PC-9 (cell line): ENCODE measurements at regions of chr7 and their contacts with region 1.

Region 1: GRCh38 chr7:116395125-116395791 is 104.3 kb upstream of the CAV2 start:
- DNase-seq: peak; percentile 85 to 90
- H3K4me3 ChIP-seq: peak overlapping the region; percentile 37; the same call in 1 of the 2 replicates
- H3K27ac ChIP-seq: peak overlapping the region; percentile 96
- H3K4me1 ChIP-seq: peaks cover 29% of the 10 kb centered on the region
- H3K27me3 ChIP-seq: no peaks in the 10 kb centered on the region
- CTCF ChIP-seq: no peak

Region 2: GRCh38 chr7:116367221-116367813 is 27.9 kb before region 1 on chr7:
- CTCF ChIA-PET with region 1: no interaction called
- POLR2A ChIA-PET with region 1: no interaction called
- intact Hi-C with region 1: loop called (anchors 2 kb)
- DNase-seq: peak in 1 of 2 experiments; percentile 52
- H3K4me3 ChIP-seq: no peak overlapping the region
- H3K27ac ChIP-seq: no peak overlapping the region
- H3K4me1 ChIP-seq: peaks cover 15% of the 10 kb centered on the region
- H3K27me3 ChIP-seq: no peaks in the 10 kb centered on the region
- CTCF ChIP-seq: no peak

Region 3: DNA sequence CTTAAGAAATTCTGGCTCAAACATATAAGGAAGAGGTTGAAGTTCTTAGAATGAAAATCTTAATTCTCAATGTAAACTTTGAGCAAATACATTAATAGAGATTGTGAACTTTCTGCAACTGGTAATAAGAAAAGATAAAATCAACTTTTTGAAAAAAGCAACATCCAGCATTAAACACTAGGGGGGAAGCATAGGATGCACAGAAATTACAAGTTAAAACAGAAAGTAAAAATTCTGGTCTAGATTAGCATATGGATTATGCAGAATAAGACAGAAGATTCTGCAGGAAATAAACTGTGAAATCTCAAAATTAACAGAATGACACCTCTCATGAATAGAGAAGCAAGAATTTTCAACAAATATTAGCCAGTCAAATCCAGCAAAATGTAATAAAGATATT is 66.2 kb after region 1 on chr7:
- CTCF ChIA-PET with region 1: no interaction called
- POLR2A ChIA-PET with region 1: interaction called, 12 read pairs
- intact Hi-C with region 1: no loop called
- DNase-seq: no peak
- H3K4me3 ChIP-seq: no peak overlapping the region
- H3K27ac ChIP-seq: no peak overlapping the region
- H3K4me1 ChIP-seq: peaks cover 26% of the 10 kb centered on the region
- H3K27me3 ChIP-seq: no peaks in the 10 kb centered on the region
- CTCF ChIP-seq: no peak

Region 4: DNA sequence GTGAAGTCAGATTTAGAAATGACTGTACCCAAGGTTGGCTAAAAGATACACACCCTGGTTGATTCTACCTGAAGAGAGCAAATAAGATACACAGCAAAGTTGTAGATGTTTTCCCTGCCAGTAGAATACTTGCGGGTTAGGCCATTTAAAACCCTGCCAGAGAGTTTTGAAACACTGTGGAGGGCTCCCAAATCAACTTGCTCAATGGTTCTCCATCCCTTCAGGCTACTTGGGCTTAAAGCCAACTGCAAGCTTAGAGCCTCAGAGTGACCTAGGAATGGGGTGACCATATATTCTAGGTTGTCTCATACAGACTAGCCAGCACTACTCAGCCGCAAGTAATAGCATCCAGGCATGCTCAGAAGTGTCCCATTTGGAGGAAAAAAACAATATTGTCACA is 139.5 kb after region 1 on chr7:
- CTCF ChIA-PET with region 1: no interaction called
- POLR2A ChIA-PET with region 1: no interaction called
- intact Hi-C with region 1: no loop called
- DNase-seq: no peak
- H3K4me3 ChIP-seq: no peak overlapping the region
- H3K27ac ChIP-seq: no peak overlapping the region
- H3K4me1 ChIP-seq: peaks cover 6% of the 10 kb centered on the region; the same call in 1 of the 2 replicates
- H3K27me3 ChIP-seq: no peaks in the 10 kb centered on the region
- CTCF ChIP-seq: no peak

Region 5: DNA sequence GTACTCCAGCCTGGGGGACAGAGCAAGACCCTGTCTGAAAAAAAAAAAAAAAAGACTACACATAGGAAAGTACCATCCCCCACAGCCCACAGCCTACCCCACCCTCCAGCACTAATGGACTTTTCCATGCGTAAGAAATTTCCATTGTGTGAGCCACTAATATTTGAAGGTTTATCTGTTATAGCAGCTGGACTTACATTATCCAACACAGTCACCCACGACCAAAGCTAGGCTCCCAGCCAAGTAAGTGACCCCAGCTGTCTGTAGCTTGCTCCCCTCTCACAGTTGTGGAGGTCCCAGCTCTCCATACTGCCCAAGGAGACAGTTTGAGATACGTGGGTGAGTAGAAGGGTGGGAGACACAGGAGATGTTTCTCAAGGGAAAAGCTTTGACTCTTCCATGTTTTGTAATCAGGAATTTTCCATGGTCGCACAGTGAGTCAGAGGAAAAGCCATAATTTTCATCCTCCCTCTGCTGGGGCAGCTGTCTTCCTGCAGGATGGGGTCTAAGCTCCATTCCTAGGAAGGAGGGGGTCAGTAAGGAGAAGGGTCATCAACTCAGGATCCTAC is 187.0 kb after region 1 on chr7:
- CTCF ChIA-PET with region 1: interaction called, 10 read pairs
- POLR2A ChIA-PET with region 1: no interaction called
- intact Hi-C with region 1: no loop called
- DNase-seq: no peak
- H3K4me3 ChIP-seq: no peak overlapping the region
- H3K27ac ChIP-seq: no peak overlapping the region
- H3K4me1 ChIP-seq: peaks cover 5% of the 10 kb centered on the region
- H3K27me3 ChIP-seq: no peaks in the 10 kb centered on the region
- CTCF ChIP-seq: no peak